K562 (cell line): ENCODE measurements at regions of chr14 and their contacts with region 1.

Region 1: GRCh38 chr14:33035416-33036194 is 96.9 kb downstream of the NPAS3 start:
- DNase-seq: no peak
- ATAC-seq: no peak
- H3K4me3 ChIP-seq: no peak overlapping the region
- H3K27ac ChIP-seq: no peak overlapping the region
- H3K4me1 ChIP-seq: no peaks in the 10 kb centered on the region
- H3K27me3 ChIP-seq: no peaks in the 10 kb centered on the region
- CTCF ChIP-seq: no peak
- EP300 ChIP-seq: no peak
- POLR2A ChIP-seq: no peak
- RAD21 ChIP-seq: no peak

Region 2: DNA sequence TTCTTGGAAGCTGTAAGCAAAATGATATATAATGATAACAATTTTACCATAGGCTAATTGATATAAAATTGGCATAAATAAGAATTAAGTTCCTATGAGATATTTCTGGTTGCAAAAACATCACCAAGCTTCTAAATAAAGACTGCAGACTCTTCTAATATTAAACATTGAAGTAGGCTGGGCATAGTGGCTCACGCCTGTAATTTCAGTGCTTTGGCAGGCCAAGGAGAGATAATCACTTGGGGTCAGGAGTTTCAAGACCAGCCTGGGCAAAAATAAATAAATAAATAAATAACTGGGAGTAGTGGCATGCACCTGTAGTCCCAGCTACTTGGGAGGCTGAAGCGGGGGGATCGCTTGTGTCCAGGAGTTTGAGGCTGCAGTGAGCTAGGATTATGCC is 25.1 kb before region 1 on chr14:
- CTCF ChIA-PET with region 1: no interaction called
- POLR2A ChIA-PET with region 1: no interaction called
- in situ Hi-C with region 1: no loop called
- intact Hi-C with region 1: no loop called
- DNase-seq: no peak
- ATAC-seq: no peak
- H3K4me3 ChIP-seq: no peak overlapping the region
- H3K27ac ChIP-seq: no peak overlapping the region
- H3K4me1 ChIP-seq: no peaks in the 10 kb centered on the region
- H3K27me3 ChIP-seq: no peaks in the 10 kb centered on the region
- CTCF ChIP-seq: no peak
- EP300 ChIP-seq: no peak
- POLR2A ChIP-seq: no peak
- RAD21 ChIP-seq: no peak

Region 3: GRCh38 chr14:33061668-33062325 is 26.2 kb after region 1 on chr14:
- CTCF ChIA-PET with region 1: no interaction called
- POLR2A ChIA-PET with region 1: no interaction called
- in situ Hi-C with region 1: no loop called
- intact Hi-C with region 1: loop called (anchors 1 kb)
- DNase-seq: no peak
- ATAC-seq: no peak
- H3K4me3 ChIP-seq: no peak overlapping the region
- H3K27ac ChIP-seq: no peak overlapping the region
- H3K4me1 ChIP-seq: no peaks in the 10 kb centered on the region
- H3K27me3 ChIP-seq: no peaks in the 10 kb centered on the region
- CTCF ChIP-seq: no peak
- EP300 ChIP-seq: no peak
- POLR2A ChIP-seq: no peak
- RAD21 ChIP-seq: no peak

Region 4: GRCh38 chr14:33073023-33073422 is 37.4 kb after region 1 on chr14:
- CTCF ChIA-PET with region 1: no interaction called
- POLR2A ChIA-PET with region 1: no interaction called
- in situ Hi-C with region 1: no loop called
- intact Hi-C with region 1: no loop called
- DNase-seq: no peak
- ATAC-seq: no peak
- H3K4me3 ChIP-seq: no peak overlapping the region
- H3K27ac ChIP-seq: no peak overlapping the region
- H3K4me1 ChIP-seq: no peaks in the 10 kb centered on the region
- H3K27me3 ChIP-seq: no peaks in the 10 kb centered on the region
- CTCF ChIP-seq: no peak
- EP300 ChIP-seq: no peak
- POLR2A ChIP-seq: no peak
- RAD21 ChIP-seq: no peak

Region 5: DNA sequence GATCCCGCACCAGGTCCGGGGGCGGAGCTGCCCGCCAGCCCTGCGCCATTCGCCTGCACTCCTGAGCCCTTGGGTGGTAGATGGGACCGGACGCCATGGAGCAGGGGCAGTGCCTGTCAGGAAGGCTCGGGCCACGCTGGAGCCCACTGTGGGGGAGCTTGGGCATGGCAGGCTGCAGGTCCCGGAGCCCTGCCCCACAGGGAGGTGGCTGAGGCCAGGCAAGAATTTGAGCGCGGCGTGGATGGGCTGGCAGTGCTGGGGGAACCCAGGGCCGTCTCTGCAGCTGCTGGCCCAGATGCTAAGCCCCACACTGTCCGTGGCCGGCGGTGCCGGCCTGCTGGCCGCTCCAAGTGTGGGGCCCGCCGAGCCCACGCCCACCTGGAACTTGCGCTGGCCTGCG is 163.1 kb after region 1 on chr14:
- CTCF ChIA-PET with region 1: no interaction called
- POLR2A ChIA-PET with region 1: no interaction called
- in situ Hi-C with region 1: no loop called
- intact Hi-C with region 1: no loop called
- DNase-seq: no peak
- ATAC-seq: no peak
- H3K4me3 ChIP-seq: no peak overlapping the region
- H3K27ac ChIP-seq: no peak overlapping the region
- H3K4me1 ChIP-seq: no peaks in the 10 kb centered on the region
- H3K27me3 ChIP-seq: no peaks in the 10 kb centered on the region
- CTCF ChIP-seq: no peak
- EP300 ChIP-seq: no peak
- POLR2A ChIP-seq: no peak
- RAD21 ChIP-seq: no peak